ENCODE measurements at regions of chr2 and their contacts with region 1.

Region 1: GRCh38 chr2:241102239-241102803 is at the start of gene MTERF4:
- DNase-seq: peak; percentile 79 to 95 (median 88)
- ATAC-seq: peak; percentile 93
- H3K4me3 ChIP-seq: peak within 1 kb of the TSS; percentile 65
- H3K4me3 Mint-ChIP-seq: peak within 1 kb of the TSS; percentile 95
- H3K27ac ChIP-seq: peak within 1 kb of the TSS; percentile 84 to 90
- H3K27ac Mint-ChIP-seq: peak within 1 kb of the TSS; percentile 95
- H3K4me1 ChIP-seq: peaks cover 80% of the 10 kb centered on the region
- H3K4me1 Mint-ChIP-seq: peaks cover 73% of the 10 kb centered on the region
- H3K27me3 ChIP-seq: no peaks in the 10 kb centered on the region
- H3K27me3 Mint-ChIP-seq: no peaks in the 10 kb centered on the region
- CTCF ChIP-seq: no peak
- total RNA-seq, gene MTERF4: 84.0 to 87.5 TPM

Region 2: GRCh38 chr2:241036397-241036963 is 65.8 kb before region 1 on chr2:
- CTCF ChIA-PET with region 1: no interaction called
- POLR2A ChIA-PET with region 1: no interaction called
- intact Hi-C with region 1: loop called in 1 of 2 experiments (anchors 10 kb)
- DNase-seq: peak; percentile 38 to 78 (median 60)
- ATAC-seq: peak; percentile 63
- H3K4me3 ChIP-seq: peak overlapping the region; percentile 67
- H3K4me3 Mint-ChIP-seq: peak overlapping the region; percentile 86
- H3K27ac ChIP-seq: peak overlapping the region; percentile 53 to 64
- H3K27ac Mint-ChIP-seq: peak overlapping the region; percentile 86
- H3K4me1 ChIP-seq: peaks cover 37% of the 10 kb centered on the region
- H3K4me1 Mint-ChIP-seq: peaks cover 15% of the 10 kb centered on the region
- H3K27me3 ChIP-seq: no peaks in the 10 kb centered on the region
- H3K27me3 Mint-ChIP-seq: peaks cover 5% of the 10 kb centered on the region
- CTCF ChIP-seq: no peak

Region 3: GRCh38 chr2:241087420-241088268 is 14.7 kb before region 1 on chr2:
- CTCF ChIA-PET with region 1: no interaction called
- POLR2A ChIA-PET with region 1: interaction called, 19 read pairs
- intact Hi-C with region 1: no loop called
- DNase-seq: peak in 2 of 14 experiments; percentile 7 to 20
- ATAC-seq: no peak
- H3K4me3 ChIP-seq: no peak overlapping the region
- H3K4me3 Mint-ChIP-seq: no peak overlapping the region
- H3K27ac ChIP-seq: no peak overlapping the region
- H3K27ac Mint-ChIP-seq: peak overlapping the region; percentile 75
- H3K4me1 ChIP-seq: no peaks in the 10 kb centered on the region
- H3K4me1 Mint-ChIP-seq: peaks cover 23% of the 10 kb centered on the region
- H3K27me3 ChIP-seq: no peaks in the 10 kb centered on the region
- H3K27me3 Mint-ChIP-seq: no peaks in the 10 kb centered on the region
- CTCF ChIP-seq: no peak

Region 4: GRCh38 chr2:241309684-241310117 is 207.4 kb after region 1 on chr2:
- CTCF ChIA-PET with region 1: no interaction called
- POLR2A ChIA-PET with region 1: interaction called, 16 read pairs
- intact Hi-C with region 1: loop called in 1 of 2 experiments (anchors 5 kb)
- DNase-seq: peak; percentile 49 to 86 (median 68)
- ATAC-seq: peak; percentile 96
- H3K4me3 ChIP-seq: no peak overlapping the region
- H3K4me3 Mint-ChIP-seq: peak overlapping the region; percentile 68
- H3K27ac ChIP-seq: peak overlapping the region; percentile 31 to 42
- H3K27ac Mint-ChIP-seq: peak overlapping the region; percentile 87
- H3K4me1 ChIP-seq: peaks cover 69% of the 10 kb centered on the region
- H3K4me1 Mint-ChIP-seq: peaks cover 89% of the 10 kb centered on the region
- H3K27me3 ChIP-seq: no peaks in the 10 kb centered on the region
- H3K27me3 Mint-ChIP-seq: no peaks in the 10 kb centered on the region
- CTCF ChIP-seq: no peak

Measured in CD4-positive, alpha-beta T cell (primary cell).